HepG2 (cell line): ENCODE measurements at regions of chr17 and their contacts with region 1.

Region 1: DNA sequence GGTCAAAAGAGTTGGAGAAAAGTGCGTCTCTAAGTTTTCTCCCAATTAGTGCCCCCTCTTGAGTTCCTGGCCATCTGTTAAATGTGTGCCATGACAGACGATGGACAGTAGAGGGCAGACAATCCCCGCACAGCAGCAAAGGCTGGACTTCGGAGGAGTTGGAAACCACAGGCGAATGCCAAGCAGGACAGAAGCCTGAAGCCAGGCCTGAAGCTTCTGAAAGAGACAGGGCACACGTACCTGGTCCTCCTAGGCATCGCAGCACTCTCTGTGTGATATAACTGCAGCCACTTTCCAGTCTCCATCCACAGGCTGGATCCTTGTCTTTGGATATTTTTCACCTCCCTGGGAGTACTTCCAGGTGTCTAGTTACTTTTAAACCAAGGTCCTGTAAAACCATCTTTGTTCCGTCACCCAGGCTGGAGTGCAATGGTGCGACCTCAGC is 14.5 kb downstream of the C17orf100 start:
- DNase-seq: peak; percentile 78
- ATAC-seq: peak; percentile 94
- H3K4me3 ChIP-seq: no peak overlapping the region
- H3K27ac ChIP-seq: no peak overlapping the region
- H3K4me1 ChIP-seq: peaks cover 46% of the 10 kb centered on the region
- H3K27me3 ChIP-seq: no peaks in the 10 kb centered on the region
- CTCF ChIP-seq: peak; percentile 98
- EP300 ChIP-seq: no peak
- POLR2A ChIP-seq: no peak
- RAD21 ChIP-seq: peak; percentile 95

Region 2: DNA sequence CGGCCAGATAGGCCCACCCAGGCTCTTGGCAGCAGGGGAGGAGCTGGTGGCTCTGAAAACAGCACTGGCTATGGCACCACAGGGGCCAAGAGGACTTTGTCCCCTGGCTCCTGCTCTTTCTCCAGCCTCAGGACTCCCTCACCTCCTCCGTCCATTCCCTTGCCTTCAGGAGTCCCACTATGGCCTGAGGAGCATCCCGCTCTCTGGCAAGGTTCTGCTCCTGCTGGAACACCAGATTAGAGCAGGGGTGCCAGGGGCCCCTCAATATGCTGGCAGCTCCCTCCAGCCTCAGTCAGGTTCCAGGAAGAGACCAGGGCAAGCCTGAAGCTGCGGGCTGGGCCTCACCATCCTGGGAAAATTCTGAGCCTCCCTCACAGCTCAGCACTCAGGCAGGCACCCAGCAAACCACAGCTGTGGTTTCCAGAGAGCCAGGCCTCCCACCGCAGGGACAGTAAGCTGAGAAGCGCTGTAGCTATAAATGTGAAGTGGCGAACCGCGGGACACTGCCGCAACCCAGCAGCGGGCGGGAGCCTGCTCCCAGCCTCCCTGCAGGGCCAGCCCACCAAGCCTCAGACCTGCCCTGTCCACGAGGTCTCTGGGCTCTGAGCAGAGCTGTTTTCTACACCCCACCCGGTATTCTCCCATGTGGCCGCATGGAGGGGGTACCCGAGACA is 11.2 kb after region 1 on chr17:
- CTCF ChIA-PET with region 1: no interaction called
- POLR2A ChIA-PET with region 1: interaction called, 16 read pairs
- in situ Hi-C with region 1: no loop called
- intact Hi-C with region 1: loop called (anchors 2 kb)
- DNase-seq: peak; percentile 27
- ATAC-seq: peak; percentile 69
- H3K4me3 ChIP-seq: peak overlapping the region; percentile 33 to 64 (median 43); a peak in 5 of 6 replicates
- H3K27ac ChIP-seq: peak overlapping the region; percentile 49
- H3K4me1 ChIP-seq: peaks cover 72% of the 10 kb centered on the region
- H3K27me3 ChIP-seq: no peaks in the 10 kb centered on the region; a peak in 1 of 5 replicates
- CTCF ChIP-seq: no peak; the same call in 1 of the 2 replicates
- EP300 ChIP-seq: no peak
- POLR2A ChIP-seq: peak in 1 of 2 experiments; percentile 50; a peak in 1 of 4 replicates
- RAD21 ChIP-seq: no peak

Region 3: GRCh38 chr17:6701719-6702118 is 35.6 kb after region 1 on chr17:
- CTCF ChIA-PET with region 1: interaction called, 14 read pairs
- POLR2A ChIA-PET with region 1: interaction called, 33 read pairs
- in situ Hi-C with region 1: no loop called
- intact Hi-C with region 1: loop called (anchors 1 kb)
- DNase-seq: peak; percentile 61
- ATAC-seq: peak; percentile 29
- H3K4me3 ChIP-seq: peak overlapping the region in 1 of 3 experiments; percentile 41; a peak in 1 of 6 replicates
- H3K27ac ChIP-seq: peak overlapping the region; percentile 97
- H3K4me1 ChIP-seq: peaks cover 87% of the 10 kb centered on the region
- H3K27me3 ChIP-seq: no peaks in the 10 kb centered on the region
- CTCF ChIP-seq: peak; percentile 64
- EP300 ChIP-seq: no peak
- POLR2A ChIP-seq: no peak
- RAD21 ChIP-seq: peak; percentile 46; the same call in 1 of the 2 replicates

Region 4: GRCh38 chr17:6831661-6832263 is 165.7 kb after region 1 on chr17 and contains the start of gene TEKT1:
- CTCF ChIA-PET with region 1: no interaction called
- POLR2A ChIA-PET with region 1: no interaction called
- in situ Hi-C with region 1: loop called (anchors 10 kb)
- intact Hi-C with region 1: no loop called
- DNase-seq: peak; percentile 77
- ATAC-seq: peak; percentile 98
- H3K4me3 ChIP-seq: peak within 1 kb of the TSS; percentile 41 to 73 (median 51); a peak in 5 of 6 replicates
- H3K27ac ChIP-seq: no peak within 1 kb of the TSS
- H3K4me1 ChIP-seq: peaks cover 13% of the 10 kb centered on the region
- H3K27me3 ChIP-seq: peaks cover 1 to 20% of the 10 kb centered on the region in 2 experiments; a peak in 3 of 5 replicates
- CTCF ChIP-seq: no peak
- EP300 ChIP-seq: no peak
- POLR2A ChIP-seq: no peak
- RAD21 ChIP-seq: no peak
- total RNA-seq, gene TEKT1: not detected in 2 replicates

Region 5: DNA sequence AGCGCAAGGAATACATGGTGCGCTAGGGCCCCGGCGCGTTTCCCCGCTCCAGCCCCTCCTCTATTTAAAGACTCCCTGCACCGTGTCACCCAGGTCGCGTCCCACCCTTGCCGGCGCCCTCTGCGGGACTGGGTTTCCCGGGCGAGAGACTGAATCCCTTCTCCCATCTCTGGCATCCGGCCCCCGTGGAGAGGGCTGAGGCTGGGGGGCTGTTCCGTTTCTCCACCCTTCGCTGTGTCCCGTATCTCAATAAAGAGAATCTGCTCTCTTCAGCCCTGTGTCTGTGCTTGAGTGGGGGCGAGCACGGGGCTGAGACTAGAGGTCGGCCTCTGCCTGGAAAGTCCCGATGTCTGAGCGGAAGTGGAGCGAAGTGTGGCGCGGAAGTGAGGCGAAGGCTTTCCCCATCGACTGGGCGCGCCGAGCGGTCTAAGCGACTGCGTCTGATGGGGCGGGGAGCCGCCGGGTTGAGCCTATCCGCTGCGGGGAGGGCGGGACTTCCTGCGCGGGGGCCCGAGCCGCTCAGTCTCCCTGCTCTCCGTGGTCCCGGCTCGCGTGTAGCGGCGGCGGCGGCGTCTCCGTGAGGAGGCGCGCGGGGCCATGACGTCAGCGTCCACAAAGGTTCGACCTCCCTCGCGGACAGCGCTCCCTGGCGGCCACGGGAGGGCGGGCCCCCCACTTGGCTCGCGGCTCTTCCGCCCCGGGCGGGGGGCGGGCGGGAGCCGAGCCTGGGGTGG is 348.3 kb after region 1 on chr17:
- CTCF ChIA-PET with region 1: no interaction called
- POLR2A ChIA-PET with region 1: no interaction called
- in situ Hi-C with region 1: loop called (anchors 10 kb)
- intact Hi-C with region 1: loop called (anchors 5 kb)
- DNase-seq: peak; percentile 90
- ATAC-seq: peak; percentile 91
- H3K4me3 ChIP-seq: peak overlapping the region; percentile 83 to 97 (median 84)
- H3K27ac ChIP-seq: peak overlapping the region; percentile 98
- H3K4me1 ChIP-seq: peaks cover 42% of the 10 kb centered on the region
- H3K27me3 ChIP-seq: no peaks in the 10 kb centered on the region; a peak in 2 of 5 replicates
- CTCF ChIP-seq: peak; percentile 81
- EP300 ChIP-seq: 0 out of 4 replicates have a peak, but pooled peaks of 1 of the 2 experiments have one; percentile 9
- POLR2A ChIP-seq: peak; percentile 85 to 92
- RAD21 ChIP-seq: no peak